Sigmoid colon (tissue), 7 donors: ENCODE measurements at regions of chr3 and their contacts with region 1.

Region 1: GRCh38 chr3:45188719-45189659 is 37.1 kb downstream of the TMEM158 start:
- DNase-seq: no peak
- H3K4me3 ChIP-seq: no peak overlapping the region
- H3K27ac ChIP-seq: peak overlapping the region in 3 of 4 donors; percentile 60 to 74 (median 63)
- H3K4me1 ChIP-seq: peaks cover 0 to 25% (median 17%) of the 10 kb centered on the region in 4 donors
- H3K27me3 ChIP-seq: no peaks in the 10 kb centered on the region
- CTCF ChIP-seq: no peak
- EP300 ChIP-seq: peak in 2 of 4 donors; percentile 17 to 53
- POLR2A ChIP-seq: no peak

Region 2: GRCh38 chr3:45055411-45056143 is 133.4 kb before region 1 on chr3:
- intact Hi-C with region 1: loop called (anchors 5 kb)
- DNase-seq: no peak
- H3K4me3 ChIP-seq: no peak overlapping the region
- H3K27ac ChIP-seq: peak overlapping the region in 3 of 4 donors; percentile 71 to 79 (median 73)
- H3K4me1 ChIP-seq: peaks cover 0 to 44% (median 35%) of the 10 kb centered on the region in 4 donors
- H3K27me3 ChIP-seq: no peaks in the 10 kb centered on the region
- CTCF ChIP-seq: no peak
- EP300 ChIP-seq: no peak
- POLR2A ChIP-seq: no peak

Region 3: GRCh38 chr3:45109771-45110508 is 79.0 kb before region 1 on chr3:
- intact Hi-C with region 1: loop called (anchors 5 kb)
- DNase-seq: no peak
- H3K4me3 ChIP-seq: no peak overlapping the region
- H3K27ac ChIP-seq: no peak overlapping the region
- H3K4me1 ChIP-seq: peaks cover 0 to 18% (median 14%) of the 10 kb centered on the region in 4 donors
- H3K27me3 ChIP-seq: no peaks in the 10 kb centered on the region
- CTCF ChIP-seq: no peak
- EP300 ChIP-seq: no peak
- POLR2A ChIP-seq: no peak

Region 4: GRCh38 chr3:45280232-45280631 is 91.2 kb after region 1 on chr3:
- intact Hi-C with region 1: no loop called
- DNase-seq: no peak
- H3K4me3 ChIP-seq: no peak overlapping the region
- H3K27ac ChIP-seq: no peak overlapping the region
- H3K4me1 ChIP-seq: no peaks in the 10 kb centered on the region
- H3K27me3 ChIP-seq: no peaks in the 10 kb centered on the region
- CTCF ChIP-seq: no peak
- EP300 ChIP-seq: no peak
- POLR2A ChIP-seq: no peak